GM12878 (cell line): ENCODE measurements at regions of chr6 and their contacts with region 1.

Region 1: GRCh38 chr6:63685446-63686379 is 50.1 kb downstream of the PHF3 start:
- DNase-seq: peak; percentile 35
- ATAC-seq: peak; percentile 88
- H3K4me3 ChIP-seq: peak overlapping the region; percentile 14; the same call in 1 of the 2 replicates
- H3K27ac ChIP-seq: peak overlapping the region; percentile 78
- H3K4me1 ChIP-seq: peaks cover 17% of the 10 kb centered on the region
- H3K27me3 ChIP-seq: no peaks in the 10 kb centered on the region
- CTCF ChIP-seq: no peak
- EP300 ChIP-seq: no peak
- POLR2A ChIP-seq: no peak
- RAD21 ChIP-seq: no peak

Region 2: GRCh38 chr6:63371104-63371715 is 314.5 kb before region 1 on chr6:
- CTCF ChIA-PET with region 1: no interaction called
- POLR2A ChIA-PET with region 1: no interaction called
- RAD21 ChIA-PET with region 1: no interaction called
- SMC1A ChIA-PET with region 1: no interaction called
- in situ Hi-C with region 1: no loop called
- intact Hi-C with region 1: no loop called
- DNase-seq: no peak
- ATAC-seq: no peak
- H3K4me3 ChIP-seq: no peak overlapping the region
- H3K27ac ChIP-seq: no peak overlapping the region
- H3K4me1 ChIP-seq: no peaks in the 10 kb centered on the region
- H3K27me3 ChIP-seq: no peaks in the 10 kb centered on the region
- CTCF ChIP-seq: no peak
- EP300 ChIP-seq: no peak
- POLR2A ChIP-seq: no peak
- RAD21 ChIP-seq: no peak

Region 3: GRCh38 chr6:63504777-63505384 is 180.8 kb before region 1 on chr6:
- CTCF ChIA-PET with region 1: no interaction called
- POLR2A ChIA-PET with region 1: no interaction called
- RAD21 ChIA-PET with region 1: no interaction called
- SMC1A ChIA-PET with region 1: no interaction called
- in situ Hi-C with region 1: no loop called
- intact Hi-C with region 1: no loop called
- DNase-seq: peak; percentile 89
- ATAC-seq: peak; percentile 93
- H3K4me3 ChIP-seq: 0 out of 2 replicates have a peak overlapping the region, but pooled peaks have one; percentile 18
- H3K27ac ChIP-seq: peak overlapping the region; percentile 66
- H3K4me1 ChIP-seq: peaks cover 30% of the 10 kb centered on the region
- H3K27me3 ChIP-seq: no peaks in the 10 kb centered on the region
- CTCF ChIP-seq: no peak
- EP300 ChIP-seq: peak; percentile 92 to 98
- POLR2A ChIP-seq: no peak
- RAD21 ChIP-seq: peak; percentile 29; the same call in 1 of the 2 replicates

Region 4: GRCh38 chr6:63527658-63528514 is 157.8 kb before region 1 on chr6:
- CTCF ChIA-PET with region 1: no interaction called
- POLR2A ChIA-PET with region 1: no interaction called
- RAD21 ChIA-PET with region 1: no interaction called
- SMC1A ChIA-PET with region 1: no interaction called
- in situ Hi-C with region 1: no loop called
- intact Hi-C with region 1: no loop called
- DNase-seq: no peak
- ATAC-seq: peak; percentile 42
- H3K4me3 ChIP-seq: no peak overlapping the region
- H3K27ac ChIP-seq: no peak overlapping the region
- H3K4me1 ChIP-seq: peaks cover 21% of the 10 kb centered on the region
- H3K27me3 ChIP-seq: no peaks in the 10 kb centered on the region
- CTCF ChIP-seq: no peak
- EP300 ChIP-seq: no peak
- POLR2A ChIP-seq: no peak
- RAD21 ChIP-seq: no peak

Region 5: DNA sequence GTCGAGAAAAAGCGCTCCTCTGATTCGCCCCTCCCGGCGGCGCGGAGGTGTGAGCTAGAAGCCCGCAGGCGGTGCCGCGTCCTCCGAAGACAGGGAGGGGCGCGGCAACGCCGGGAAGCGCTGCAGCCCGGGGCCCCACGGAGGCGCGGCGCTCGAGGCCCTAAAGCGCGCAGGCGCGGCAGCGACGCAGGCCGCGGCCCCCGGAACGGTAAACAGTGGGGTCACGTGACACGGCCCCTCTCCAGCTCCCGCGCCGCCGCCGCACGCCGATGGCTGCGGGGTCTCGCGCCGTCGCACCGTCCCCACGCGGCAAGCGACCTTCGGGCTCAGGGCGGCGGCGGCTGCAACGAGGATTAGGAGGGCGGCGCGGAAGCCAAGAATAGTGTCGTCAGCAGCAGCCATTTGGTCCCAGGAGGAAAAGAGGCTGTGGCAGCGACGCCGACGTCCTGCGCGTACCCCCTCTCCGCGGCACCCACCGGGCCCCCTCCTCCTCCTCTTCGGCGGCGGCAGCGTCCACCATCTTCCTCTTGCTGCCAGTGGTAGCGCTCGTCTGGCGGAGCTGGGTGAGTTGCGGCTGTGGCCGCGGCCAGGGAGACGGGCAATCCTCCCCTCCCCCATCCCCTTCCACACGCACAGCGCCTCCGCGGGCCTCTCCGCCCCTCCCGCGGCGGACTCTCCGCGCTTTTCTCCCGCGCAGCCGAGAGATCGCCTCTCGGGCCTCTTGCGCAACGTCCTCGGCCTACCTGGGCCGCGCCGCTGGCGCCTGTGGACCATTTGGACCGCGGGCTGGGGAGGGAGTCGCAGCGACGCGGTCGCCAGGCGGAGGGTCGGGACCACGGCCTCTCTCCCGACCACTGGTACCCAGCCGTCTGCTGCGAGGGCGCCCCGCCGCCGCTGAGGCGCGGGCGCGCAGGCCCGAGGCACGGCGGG is 49.9 kb before region 1 on chr6 and contains the start of gene PHF3:
- CTCF ChIA-PET with region 1: interaction called, 11 read pairs
- POLR2A ChIA-PET with region 1: interaction called, 4 read pairs
- RAD21 ChIA-PET with region 1: interaction called, 7 read pairs
- SMC1A ChIA-PET with region 1: interaction called, 7 read pairs
- in situ Hi-C with region 1: no loop called
- intact Hi-C with region 1: loop called (anchors 5 kb)
- DNase-seq: peak; percentile 56
- ATAC-seq: peak; percentile 88
- H3K4me3 ChIP-seq: peak within 1 kb of the TSS; percentile 78
- H3K27ac ChIP-seq: peak within 1 kb of the TSS; percentile 93
- H3K4me1 ChIP-seq: no peaks in the 10 kb centered on the region
- H3K27me3 ChIP-seq: no peaks in the 10 kb centered on the region
- CTCF ChIP-seq: peak in 1 of 3 experiments; percentile 9; a peak in 1 of 6 replicates
- EP300 ChIP-seq: no peak
- POLR2A ChIP-seq: peak; percentile 85
- RAD21 ChIP-seq: no peak
- polyA plus RNA-seq, gene PHF3: 8.3 to 9.5 TPM

Region 6: DNA sequence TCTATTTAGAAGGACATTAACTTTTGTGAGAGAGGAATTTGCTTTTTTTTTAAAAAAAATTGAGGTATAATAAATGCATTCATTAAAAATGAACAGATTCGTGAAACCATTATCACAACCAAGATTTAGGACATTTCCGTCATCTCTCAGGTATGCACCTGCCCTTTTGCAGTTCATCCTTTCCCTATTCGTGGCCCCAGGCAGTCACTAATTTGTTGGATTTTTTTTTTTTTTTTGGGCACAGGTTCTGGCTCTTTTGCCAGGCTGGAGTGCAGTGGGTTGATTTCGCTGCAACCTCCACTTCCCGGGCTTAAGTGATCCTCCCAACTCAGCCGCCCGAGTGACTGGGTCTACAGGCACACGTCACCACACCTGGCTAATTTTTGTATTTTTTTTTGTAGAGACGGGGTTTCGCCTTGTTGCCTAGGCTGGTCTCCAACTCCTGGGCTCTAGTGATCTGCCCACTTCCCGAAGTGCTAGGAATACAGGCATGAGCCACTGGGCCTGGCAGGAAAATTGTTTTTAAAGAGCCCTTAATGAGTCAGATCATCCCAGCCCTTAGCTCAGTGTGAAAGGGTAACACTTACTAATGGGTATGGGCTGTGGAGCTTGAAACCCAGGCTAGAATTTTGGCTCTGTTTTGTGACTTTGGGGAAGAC is 40.9 kb before region 1 on chr6:
- CTCF ChIA-PET with region 1: interaction called, 3 read pairs
- POLR2A ChIA-PET with region 1: interaction called, 6 read pairs
- RAD21 ChIA-PET with region 1: interaction called, 4 read pairs
- SMC1A ChIA-PET with region 1: interaction called, 15 read pairs
- in situ Hi-C with region 1: no loop called
- intact Hi-C with region 1: loop called (anchors 5 kb)
- DNase-seq: no peak
- ATAC-seq: peak; percentile 52
- H3K4me3 ChIP-seq: no peak overlapping the region
- H3K27ac ChIP-seq: no peak overlapping the region
- H3K4me1 ChIP-seq: peaks cover 4% of the 10 kb centered on the region; the same call in 1 of the 2 replicates
- H3K27me3 ChIP-seq: no peaks in the 10 kb centered on the region
- CTCF ChIP-seq: no peak
- EP300 ChIP-seq: no peak
- POLR2A ChIP-seq: no peak
- RAD21 ChIP-seq: no peak

Region 7: DNA sequence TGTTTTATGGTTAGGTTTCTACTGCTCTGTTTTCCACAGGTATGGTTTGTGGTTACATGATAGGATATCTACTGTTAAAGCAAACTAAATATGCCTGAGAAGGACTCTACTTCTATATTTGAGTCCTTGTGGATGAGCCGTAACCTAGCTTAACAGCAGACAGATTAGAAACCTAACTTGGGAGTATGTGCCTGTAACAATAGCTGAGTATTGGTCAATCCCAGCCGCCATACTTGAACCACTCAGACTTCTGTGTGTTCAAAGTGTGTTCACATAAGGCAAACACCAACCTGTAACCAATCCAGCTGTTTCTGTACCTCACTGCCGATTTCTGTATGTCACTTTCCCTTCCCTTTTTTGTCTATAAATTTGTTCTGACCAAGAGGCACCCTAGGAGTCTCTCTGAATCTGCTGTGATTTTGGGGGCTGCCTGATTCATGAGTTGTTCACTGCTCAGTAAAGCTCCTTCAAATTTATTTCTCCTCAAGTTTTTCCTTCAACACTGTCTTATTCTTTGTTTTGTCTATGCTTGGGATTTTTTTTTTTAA is 13.1 kb before region 1 on chr6:
- CTCF ChIA-PET with region 1: interaction called, 15 read pairs
- POLR2A ChIA-PET with region 1: no interaction called
- RAD21 ChIA-PET with region 1: no interaction called
- SMC1A ChIA-PET with region 1: interaction called, 10 read pairs
- in situ Hi-C with region 1: no loop called
- intact Hi-C with region 1: no loop called
- DNase-seq: no peak
- ATAC-seq: peak; percentile 61
- H3K4me3 ChIP-seq: no peak overlapping the region
- H3K27ac ChIP-seq: no peak overlapping the region
- H3K4me1 ChIP-seq: peaks cover 8% of the 10 kb centered on the region; the same call in 1 of the 2 replicates
- H3K27me3 ChIP-seq: no peaks in the 10 kb centered on the region
- CTCF ChIP-seq: no peak
- EP300 ChIP-seq: no peak
- POLR2A ChIP-seq: no peak
- RAD21 ChIP-seq: no peak

Region 8: DNA sequence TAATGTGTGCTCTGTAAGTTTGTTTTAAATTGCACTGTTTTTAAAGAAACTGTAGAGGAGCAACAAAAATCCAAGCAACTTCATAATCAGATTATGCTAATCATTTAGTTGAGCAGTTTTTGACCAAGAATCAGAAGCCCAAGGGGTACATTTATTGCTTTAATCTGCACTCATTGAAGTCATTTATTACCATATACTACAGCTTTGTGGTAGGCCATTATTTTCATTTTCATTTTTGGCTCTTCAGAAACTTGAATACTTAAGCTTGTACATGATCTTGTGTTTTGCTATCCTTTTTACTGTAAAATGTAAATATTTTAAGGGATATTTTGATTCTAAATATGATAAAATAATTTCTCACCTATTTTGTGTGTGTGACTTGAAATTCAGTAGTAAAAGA is 28.4 kb after region 1 on chr6:
- CTCF ChIA-PET with region 1: interaction called, 4 read pairs
- POLR2A ChIA-PET with region 1: no interaction called
- RAD21 ChIA-PET with region 1: interaction called, 3 read pairs
- SMC1A ChIA-PET with region 1: interaction called, 10 read pairs
- in situ Hi-C with region 1: no loop called
- intact Hi-C with region 1: no loop called
- DNase-seq: no peak
- ATAC-seq: peak; percentile 53
- H3K4me3 ChIP-seq: no peak overlapping the region
- H3K27ac ChIP-seq: no peak overlapping the region
- H3K4me1 ChIP-seq: no peaks in the 10 kb centered on the region
- H3K27me3 ChIP-seq: no peaks in the 10 kb centered on the region
- CTCF ChIP-seq: no peak
- EP300 ChIP-seq: no peak
- POLR2A ChIP-seq: no peak
- RAD21 ChIP-seq: no peak

Region 9: DNA sequence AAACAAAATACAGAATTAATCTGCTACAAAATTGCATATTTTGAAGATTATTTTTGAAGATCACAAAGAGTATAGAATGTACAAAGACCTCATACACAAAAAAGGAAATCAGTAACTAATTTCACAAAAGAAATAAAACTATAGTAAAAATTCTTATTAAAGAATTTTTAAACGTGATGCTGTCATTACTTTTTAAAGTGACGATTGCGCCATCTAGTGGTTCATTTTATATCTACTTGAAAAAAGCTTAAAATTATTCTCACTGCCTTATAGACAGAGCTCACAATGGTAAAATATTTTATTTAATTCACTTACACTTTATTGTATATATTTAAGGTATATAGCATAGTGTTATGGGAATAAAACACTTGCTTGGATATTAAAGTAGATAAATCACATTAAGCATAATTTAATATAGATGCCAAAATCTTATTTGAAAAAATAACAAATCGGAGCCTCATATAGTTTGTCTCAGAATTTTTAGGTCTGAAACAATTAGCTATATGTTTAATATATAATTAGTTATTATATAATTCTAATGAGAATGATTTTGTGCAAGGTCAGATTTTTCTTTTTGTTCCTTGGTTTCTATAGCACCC is 78.7 kb after region 1 on chr6:
- CTCF ChIA-PET with region 1: interaction called, 4 read pairs
- POLR2A ChIA-PET with region 1: no interaction called
- RAD21 ChIA-PET with region 1: interaction called, 10 read pairs
- SMC1A ChIA-PET with region 1: interaction called, 5 read pairs
- in situ Hi-C with region 1: no loop called
- intact Hi-C with region 1: no loop called
- DNase-seq: peak; percentile 5
- ATAC-seq: peak; percentile 64
- H3K4me3 ChIP-seq: no peak overlapping the region
- H3K27ac ChIP-seq: no peak overlapping the region
- H3K4me1 ChIP-seq: no peaks in the 10 kb centered on the region
- H3K27me3 ChIP-seq: no peaks in the 10 kb centered on the region
- CTCF ChIP-seq: no peak; a peak in 2 of 6 replicates
- EP300 ChIP-seq: no peak
- POLR2A ChIP-seq: no peak
- RAD21 ChIP-seq: peak; percentile 63